ENCODE measurements at regions of chr20 and their contacts with region 1.

Region 1: GRCh38 chr20:45373353-45374100 is 4.6 kb downstream of the TP53TG5 start:
- DNase-seq: peak; percentile 95
- H3K4me3 ChIP-seq: peak overlapping the region; percentile 38 to 63 (median 49)
- H3K27ac ChIP-seq: peak overlapping the region; percentile 78 to 91 (median 88)
- H3K4me1 ChIP-seq: peaks cover 8 to 26% (median 14%) of the 10 kb centered on the region in 4 donors
- H3K27me3 ChIP-seq: no peaks in the 10 kb centered on the region
- CTCF ChIP-seq: peak; percentile 88 to 97 (median 92)
- EP300 ChIP-seq: no peak
- POLR2A ChIP-seq: peak; percentile 3

Region 2: GRCh38 chr20:45322952-45323383 is 50.6 kb before region 1 on chr20:
- in situ Hi-C with region 1: no loop called
- intact Hi-C with region 1: loop called (anchors 5 kb)
- DNase-seq: peak; percentile 60
- H3K4me3 ChIP-seq: no peak overlapping the region
- H3K27ac ChIP-seq: peak overlapping the region; percentile 22 to 67 (median 37)
- H3K4me1 ChIP-seq: peaks cover 5 to 35% (median 24%) of the 10 kb centered on the region in 4 donors
- H3K27me3 ChIP-seq: no peaks in the 10 kb centered on the region
- CTCF ChIP-seq: peak in 2 of 5 experiments; percentile 23 to 43
- EP300 ChIP-seq: no peak
- POLR2A ChIP-seq: no peak

Region 3: GRCh38 chr20:45436732-45437391 is 63.3 kb after region 1 on chr20:
- in situ Hi-C with region 1: loop called in 3 of 4 experiments (anchors 10 kb)
- intact Hi-C with region 1: loop called (anchors 5 kb)
- DNase-seq: peak; percentile 93
- H3K4me3 ChIP-seq: peak overlapping the region; percentile 47 to 80 (median 52)
- H3K27ac ChIP-seq: peak overlapping the region; percentile 78 to 86 (median 80)
- H3K4me1 ChIP-seq: peaks cover 0 to 13% (median 9%) of the 10 kb centered on the region in 4 donors
- H3K27me3 ChIP-seq: no peaks in the 10 kb centered on the region
- CTCF ChIP-seq: peak; percentile 92 to 98 (median 96)
- EP300 ChIP-seq: no peak
- POLR2A ChIP-seq: peak; percentile 38

Region 4: DNA sequence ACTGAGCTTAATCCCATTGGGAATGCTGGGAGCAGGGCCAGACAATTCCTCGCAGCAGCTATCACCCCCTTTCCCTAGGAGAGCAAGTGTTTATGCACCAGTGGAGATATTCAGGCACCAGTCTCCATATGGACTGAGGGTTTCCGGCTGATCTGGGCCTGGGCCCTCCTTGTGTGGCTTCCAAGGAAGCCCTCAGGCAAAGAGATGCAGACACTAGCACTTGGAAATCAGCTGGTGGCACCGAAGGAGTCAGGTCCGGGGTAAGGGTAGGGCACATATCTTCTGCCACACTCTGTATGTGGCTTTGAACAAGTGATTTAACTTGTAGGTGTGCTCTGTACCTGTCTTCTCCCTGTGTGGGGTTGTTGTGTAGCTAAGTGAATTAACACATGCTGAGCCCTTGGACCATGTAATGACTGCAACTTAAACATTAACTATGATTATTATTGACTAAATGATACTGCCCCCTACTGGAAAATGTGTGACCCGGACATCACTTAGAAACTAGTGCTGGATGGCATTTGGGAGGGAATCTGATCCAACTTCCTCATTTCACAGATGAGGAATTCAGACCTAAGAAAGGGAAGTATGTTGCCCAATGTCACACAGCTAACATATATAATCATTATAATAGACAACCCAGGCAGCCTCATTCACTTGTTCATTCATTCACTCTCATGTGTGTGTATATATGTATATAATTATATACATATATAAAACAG is 76.7 kb after region 1 on chr20:
- in situ Hi-C with region 1: loop called in 2 of 4 experiments (anchors 10 kb)
- intact Hi-C with region 1: no loop called
- DNase-seq: peak; percentile 23
- H3K4me3 ChIP-seq: no peak overlapping the region
- H3K27ac ChIP-seq: peak overlapping the region; percentile 76 to 86 (median 80)
- H3K4me1 ChIP-seq: peaks cover 0 to 13% (median 7%) of the 10 kb centered on the region in 4 donors
- H3K27me3 ChIP-seq: no peaks in the 10 kb centered on the region
- CTCF ChIP-seq: peak; percentile 58 to 78 (median 67)
- EP300 ChIP-seq: no peak
- POLR2A ChIP-seq: no peak

Measured in transverse colon (tissue), 4 donors.